Ascending aorta (tissue), 2 donors: ENCODE measurements at regions of chr1 and their contacts with region 1.

Region 1: DNA sequence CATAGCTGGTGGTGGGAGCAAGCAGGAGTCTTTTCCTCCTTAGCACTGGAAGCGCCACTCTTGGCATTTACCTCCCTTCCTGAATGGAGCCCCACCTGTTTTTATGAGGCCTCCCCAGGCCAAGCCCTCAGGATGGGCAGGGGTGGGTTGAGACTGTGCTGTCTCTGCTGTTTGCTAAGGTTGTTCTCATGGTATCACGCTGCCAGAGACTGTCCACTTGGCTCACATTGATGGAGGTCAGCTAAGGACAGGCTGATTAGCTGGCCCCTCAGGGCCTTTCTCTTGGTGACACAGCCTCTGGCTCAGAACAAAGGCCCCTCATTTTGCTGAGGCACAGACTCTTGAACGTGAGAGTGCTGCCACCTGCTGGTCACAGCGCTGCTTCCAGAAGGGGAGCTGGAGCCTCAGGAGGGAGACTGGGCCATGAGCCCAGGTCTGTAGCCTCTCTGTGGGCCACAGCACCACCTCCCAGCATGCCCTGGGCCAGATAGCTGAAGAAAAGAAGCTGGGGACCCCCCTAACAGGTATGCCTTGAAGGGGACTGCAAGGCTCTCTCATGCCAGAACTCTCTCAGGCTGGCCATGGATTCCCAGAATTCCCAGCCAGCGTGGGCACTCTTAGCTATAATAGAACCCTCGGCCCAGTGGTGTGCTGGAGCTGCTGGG is 85.6 kb downstream of the CD58 start:
- DNase-seq: peak in 1 of 2 donors; percentile 92
- H3K4me3 ChIP-seq: no peak overlapping the region
- H3K27ac ChIP-seq: no peak overlapping the region
- H3K4me1 ChIP-seq: peaks cover 0 to 4% of the 10 kb centered on the region in 2 donors
- H3K27me3 ChIP-seq: no peaks in the 10 kb centered on the region
- CTCF ChIP-seq: peak; percentile 89 to 91 (median 91)

Region 2: DNA sequence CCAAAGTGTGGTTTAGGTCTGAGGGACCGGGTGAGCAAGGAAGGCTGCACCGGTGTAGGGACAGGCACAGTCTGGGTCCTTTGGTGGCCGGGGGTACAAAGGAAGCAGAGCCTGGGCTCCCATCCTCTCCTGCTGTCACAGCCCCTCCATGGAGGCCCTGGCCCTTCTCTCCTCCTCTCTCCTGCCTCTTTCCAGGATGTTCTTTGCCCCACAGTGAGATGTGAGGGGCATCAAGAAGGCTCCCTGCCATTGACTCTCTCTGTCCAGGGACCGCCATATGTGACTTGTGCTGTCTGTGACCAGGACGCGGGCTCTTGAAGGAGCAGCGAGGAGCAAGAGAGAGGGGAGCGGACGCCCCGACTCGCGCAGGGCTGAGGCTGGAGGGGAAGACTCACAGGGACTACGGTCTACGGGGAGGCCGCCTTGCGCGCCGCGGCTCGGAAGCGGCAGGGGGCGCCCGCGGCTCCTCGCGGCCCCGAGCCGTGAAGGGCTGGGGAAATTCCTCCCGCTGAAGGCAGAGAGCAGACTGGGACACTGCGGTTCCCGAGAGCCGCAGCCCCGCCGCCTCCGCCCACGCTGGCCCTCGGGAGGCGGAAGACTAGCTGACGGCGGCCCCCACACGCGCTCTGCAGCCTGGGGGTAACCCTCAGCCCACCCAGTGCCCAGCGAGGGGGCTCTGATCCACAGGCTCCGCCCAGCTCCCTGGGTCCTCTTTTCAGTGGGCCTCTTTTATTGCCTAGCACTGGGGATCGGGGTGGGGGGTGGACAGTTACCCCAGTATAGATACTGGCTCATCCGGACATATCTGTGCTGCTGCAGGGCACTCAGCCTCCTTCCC is 333.2 kb before region 1 on chr1:
- intact Hi-C with region 1: loop called (anchors 2 kb)
- DNase-seq: peak in 1 of 2 donors; percentile 87
- H3K4me3 ChIP-seq: peak overlapping the region; percentile 35 to 64
- H3K27ac ChIP-seq: no peak overlapping the region
- H3K4me1 ChIP-seq: peaks cover 0 to 2% of the 10 kb centered on the region in 2 donors
- H3K27me3 ChIP-seq: no peaks in the 10 kb centered on the region
- CTCF ChIP-seq: peak; percentile 87 to 94 (median 93)

Region 3: GRCh38 chr1:116360429-116361173 is 124.6 kb before region 1 on chr1:
- intact Hi-C with region 1: loop called (anchors 2 kb)
- DNase-seq: no peak
- H3K4me3 ChIP-seq: no peak overlapping the region
- H3K27ac ChIP-seq: no peak overlapping the region
- H3K4me1 ChIP-seq: no peaks in the 10 kb centered on the region
- H3K27me3 ChIP-seq: no peaks in the 10 kb centered on the region
- CTCF ChIP-seq: peak in 2 of 3 experiments; percentile 22 to 54

Region 4: GRCh38 chr1:116529199-116529616 is 44.0 kb after region 1 on chr1:
- intact Hi-C with region 1: no loop called
- DNase-seq: no peak
- H3K4me3 ChIP-seq: no peak overlapping the region
- H3K27ac ChIP-seq: no peak overlapping the region
- H3K4me1 ChIP-seq: no peaks in the 10 kb centered on the region
- H3K27me3 ChIP-seq: no peaks in the 10 kb centered on the region
- CTCF ChIP-seq: no peak

Region 5: GRCh38 chr1:116556289-116557006 is 71.2 kb after region 1 on chr1:
- intact Hi-C with region 1: no loop called
- DNase-seq: peak; percentile 64 to 87
- H3K4me3 ChIP-seq: no peak overlapping the region
- H3K27ac ChIP-seq: peak overlapping the region; percentile 35 to 44
- H3K4me1 ChIP-seq: no peaks in the 10 kb centered on the region
- H3K27me3 ChIP-seq: no peaks in the 10 kb centered on the region
- CTCF ChIP-seq: no peak

Region 6: DNA sequence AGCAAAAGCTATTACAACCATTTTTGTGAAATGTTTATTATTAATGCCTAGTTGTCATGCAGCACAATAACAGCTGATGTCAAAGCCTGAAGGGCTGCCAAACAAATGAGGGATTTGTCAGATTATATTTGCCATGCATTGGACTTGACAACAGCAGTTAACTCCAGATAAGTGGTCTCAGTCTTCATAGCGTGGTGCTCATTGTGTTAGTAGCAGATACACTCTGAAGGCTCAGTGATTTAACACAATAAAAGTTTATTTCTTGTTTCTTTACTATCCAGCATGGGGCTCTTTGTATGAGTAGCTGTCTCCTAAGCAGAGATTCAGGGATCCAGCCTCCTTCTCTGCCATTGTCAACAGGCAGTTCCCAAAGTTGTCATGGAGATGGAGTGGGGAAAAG is 348.5 kb after region 1 on chr1:
- intact Hi-C with region 1: no loop called
- DNase-seq: no peak
- H3K4me3 ChIP-seq: no peak overlapping the region
- H3K27ac ChIP-seq: no peak overlapping the region
- H3K4me1 ChIP-seq: no peaks in the 10 kb centered on the region
- H3K27me3 ChIP-seq: no peaks in the 10 kb centered on the region
- CTCF ChIP-seq: no peak